Aorta (tissue), 5 donors: ENCODE measurements at regions of chr1 and their contacts with region 1.

Region 1: DNA sequence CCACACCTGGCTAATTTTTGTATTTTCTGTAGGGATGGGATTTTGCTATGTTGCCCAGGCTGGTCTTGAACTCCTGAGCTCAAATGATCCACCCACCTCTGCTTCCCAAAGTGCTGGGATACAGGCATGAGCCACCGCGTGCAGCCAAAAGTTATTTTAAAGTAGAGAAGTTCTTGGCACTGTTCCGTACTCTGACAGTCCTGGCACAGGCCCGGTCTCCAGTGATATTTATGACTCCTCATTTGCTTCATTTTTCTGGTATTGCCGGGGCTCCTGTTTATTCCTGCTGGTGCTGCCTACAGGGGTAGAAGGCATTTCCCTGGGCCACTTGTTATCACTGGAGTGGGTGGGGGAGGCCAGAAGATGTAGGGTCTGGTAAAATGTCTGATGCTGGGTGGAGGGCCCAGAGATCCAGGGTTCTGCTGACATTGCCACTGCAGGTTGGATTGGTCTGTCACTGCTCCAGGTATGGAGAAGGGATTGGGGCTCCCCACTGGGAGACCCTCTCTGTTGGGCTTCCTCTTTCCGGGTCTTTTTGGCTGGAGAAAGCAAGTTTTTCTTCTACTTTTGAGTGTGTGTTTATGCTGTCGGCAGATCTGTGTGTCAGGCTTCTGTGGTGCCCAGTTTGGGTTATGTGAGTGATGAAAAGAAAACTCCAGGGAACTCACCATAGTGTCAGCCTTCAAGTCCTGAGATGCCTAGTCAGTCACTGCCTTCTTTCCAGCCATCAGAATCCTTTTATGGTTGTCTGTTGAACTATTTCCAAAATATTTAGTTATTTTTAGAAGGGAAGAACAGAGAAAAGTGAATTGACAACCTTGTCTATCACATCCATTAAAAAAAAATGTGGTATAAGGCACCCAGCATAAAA is 4.5 kb downstream of the MROH7 start:
- DNase-seq: peak; percentile 67 to 84
- ATAC-seq: peak; percentile 79
- H3K4me3 ChIP-seq: no peak overlapping the region
- H3K27ac ChIP-seq: peak overlapping the region; percentile 1 to 67
- H3K4me1 ChIP-seq: peaks cover 0 to 4% of the 10 kb centered on the region in 2 donors
- H3K27me3 ChIP-seq: no peaks in the 10 kb centered on the region

Region 2: DNA sequence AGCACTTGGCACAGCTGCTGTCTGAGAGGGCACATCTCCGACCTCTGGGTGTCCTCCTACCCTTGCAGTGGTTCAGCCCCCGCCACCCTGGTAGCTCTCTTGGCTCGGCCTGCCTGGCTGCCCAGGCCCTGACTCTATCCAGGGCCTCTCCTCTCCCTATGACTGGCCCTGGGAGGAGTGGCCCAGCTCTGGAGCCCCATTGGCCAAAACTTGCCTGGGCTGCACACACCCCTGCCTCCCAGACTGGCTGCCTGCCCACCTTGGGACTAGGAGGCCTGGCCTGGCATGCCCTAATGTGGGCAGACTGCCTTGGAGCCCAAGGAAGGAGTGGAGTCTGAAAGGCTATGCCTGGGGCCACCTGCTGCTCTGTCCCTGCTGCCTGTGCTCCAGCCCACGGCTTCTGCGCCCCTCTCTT is 64.4 kb before region 1 on chr1:
- intact Hi-C with region 1: loop called in 1 of 2 experiments (anchors 5 kb)
- DNase-seq: peak; percentile 96 to 98
- ATAC-seq: peak; percentile 96
- H3K4me3 ChIP-seq: no peak overlapping the region
- H3K27ac ChIP-seq: peak overlapping the region; percentile 15 to 97
- H3K4me1 ChIP-seq: peaks cover 0 to 2% of the 10 kb centered on the region in 2 donors
- H3K27me3 ChIP-seq: no peaks in the 10 kb centered on the region

Region 3: DNA sequence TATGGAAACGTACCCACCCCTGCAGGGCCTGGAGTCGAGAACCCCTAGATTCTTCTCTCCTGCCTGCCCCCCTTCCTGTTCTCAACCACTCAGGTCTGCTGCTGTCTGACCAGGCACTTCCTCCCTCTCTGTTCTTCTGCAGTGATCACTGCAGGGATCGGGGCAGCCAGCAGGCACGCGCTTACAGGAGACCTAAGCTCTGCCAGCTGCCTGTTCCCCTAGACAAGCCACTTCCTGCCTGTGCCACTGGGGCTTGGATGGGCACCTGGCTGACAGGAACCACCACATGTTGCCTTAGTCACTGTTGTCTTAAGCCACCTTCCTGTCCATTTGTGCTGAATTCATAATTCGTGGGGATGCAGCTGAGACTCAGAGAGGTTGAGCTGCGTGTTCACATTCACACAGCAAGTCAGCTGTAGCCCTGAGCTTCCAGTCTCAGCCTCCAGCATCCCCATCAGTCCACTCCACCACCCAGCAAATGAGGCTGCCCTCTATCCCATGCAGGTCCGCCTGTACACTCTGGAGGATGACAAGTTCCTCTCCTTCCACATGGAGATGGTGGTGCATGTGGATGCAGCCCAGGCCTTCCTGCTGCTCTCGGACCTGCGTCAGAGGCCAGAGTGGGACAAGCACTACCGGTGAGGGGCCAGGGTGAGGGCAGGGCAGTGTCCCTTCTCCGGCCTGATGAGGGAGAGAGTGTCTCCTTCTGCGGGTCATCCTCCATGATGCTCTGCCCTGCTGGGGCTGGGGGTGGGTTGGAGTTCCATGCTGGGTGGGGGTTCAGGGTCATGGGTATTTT is 41.3 kb before region 1 on chr1:
- intact Hi-C with region 1: no loop called
- DNase-seq: no peak
- ATAC-seq: no peak
- H3K4me3 ChIP-seq: no peak overlapping the region
- H3K27ac ChIP-seq: no peak overlapping the region
- H3K4me1 ChIP-seq: no peaks in the 10 kb centered on the region
- H3K27me3 ChIP-seq: no peaks in the 10 kb centered on the region